ENCODE measurements at regions of chr12 and their contacts with region 1.

Region 1: GRCh38 chr12:88805692-88806091 is 225.4 kb upstream of the KITLG start:
- DNase-seq: no peak
- ATAC-seq: no peak
- H3K4me3 ChIP-seq: no peak overlapping the region
- H3K27ac ChIP-seq: no peak overlapping the region
- H3K4me1 ChIP-seq: no peaks in the 10 kb centered on the region
- H3K27me3 ChIP-seq: no peaks in the 10 kb centered on the region
- CTCF ChIP-seq: no peak

Region 2: DNA sequence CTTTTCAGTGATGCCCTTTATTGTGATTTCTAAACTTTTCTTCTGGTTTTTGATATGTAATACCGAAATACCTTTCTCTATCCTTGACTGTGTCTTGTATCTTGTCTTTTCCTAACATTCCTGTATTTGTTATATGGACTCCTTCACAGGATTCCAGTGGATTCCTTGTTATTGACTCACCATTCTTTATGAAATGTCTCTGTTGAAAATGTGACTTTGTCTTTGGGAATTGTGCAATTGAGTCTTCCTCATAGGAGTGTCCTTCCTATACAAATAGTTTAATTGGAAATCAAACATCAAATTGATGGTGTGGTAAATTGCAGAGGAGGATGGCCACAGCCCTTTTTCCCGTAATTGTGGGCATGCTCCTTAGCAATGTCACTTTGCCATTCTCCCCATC is 71.2 kb after region 1 on chr12:
- intact Hi-C with region 1: no loop called
- DNase-seq: no peak
- ATAC-seq: no peak
- H3K4me3 ChIP-seq: no peak overlapping the region
- H3K27ac ChIP-seq: no peak overlapping the region
- H3K4me1 ChIP-seq: no peaks in the 10 kb centered on the region
- H3K27me3 ChIP-seq: no peaks in the 10 kb centered on the region
- CTCF ChIP-seq: no peak

Region 3: DNA sequence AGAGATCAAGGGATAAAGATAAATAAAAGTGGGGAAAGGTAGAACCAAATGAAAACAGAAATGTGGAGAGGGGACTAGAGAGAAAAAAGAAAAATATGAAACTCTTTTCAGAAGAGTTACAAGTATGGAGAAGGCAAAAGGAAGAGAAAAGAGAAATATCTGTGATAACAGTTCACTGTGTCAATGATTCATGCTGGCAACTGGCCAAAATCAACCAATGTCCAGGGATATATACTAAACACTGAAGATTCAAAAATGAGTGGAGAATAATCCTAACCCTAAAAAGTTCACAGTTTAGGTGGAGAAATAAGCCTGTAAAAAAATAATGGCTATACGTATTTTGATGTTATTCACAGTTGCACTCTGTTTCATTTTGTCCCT is 146.9 kb after region 1 on chr12:
- intact Hi-C with region 1: no loop called
- DNase-seq: peak in 1 of 2 donors; percentile 9
- ATAC-seq: no peak
- H3K4me3 ChIP-seq: no peak overlapping the region
- H3K27ac ChIP-seq: no peak overlapping the region
- H3K4me1 ChIP-seq: peaks cover 0 to 26% (median 3%) of the 10 kb centered on the region in 9 donors
- H3K27me3 ChIP-seq: no peaks in the 10 kb centered on the region
- CTCF ChIP-seq: no peak

Region 4: GRCh38 chr12:90449611-90450010 is 1643.9 kb after region 1 on chr12:
- intact Hi-C with region 1: loop called in 1 of 10 experiments (anchors 5 kb)
- DNase-seq: no peak
- ATAC-seq: no peak
- H3K4me3 ChIP-seq: no peak overlapping the region
- H3K27ac ChIP-seq: no peak overlapping the region
- H3K4me1 ChIP-seq: no peaks in the 10 kb centered on the region
- H3K27me3 ChIP-seq: no peaks in the 10 kb centered on the region
- CTCF ChIP-seq: no peak